CD8-positive, alpha-beta T cell (primary cell): ENCODE measurements at regions of chr4 and their contacts with region 1.

Region 1: DNA sequence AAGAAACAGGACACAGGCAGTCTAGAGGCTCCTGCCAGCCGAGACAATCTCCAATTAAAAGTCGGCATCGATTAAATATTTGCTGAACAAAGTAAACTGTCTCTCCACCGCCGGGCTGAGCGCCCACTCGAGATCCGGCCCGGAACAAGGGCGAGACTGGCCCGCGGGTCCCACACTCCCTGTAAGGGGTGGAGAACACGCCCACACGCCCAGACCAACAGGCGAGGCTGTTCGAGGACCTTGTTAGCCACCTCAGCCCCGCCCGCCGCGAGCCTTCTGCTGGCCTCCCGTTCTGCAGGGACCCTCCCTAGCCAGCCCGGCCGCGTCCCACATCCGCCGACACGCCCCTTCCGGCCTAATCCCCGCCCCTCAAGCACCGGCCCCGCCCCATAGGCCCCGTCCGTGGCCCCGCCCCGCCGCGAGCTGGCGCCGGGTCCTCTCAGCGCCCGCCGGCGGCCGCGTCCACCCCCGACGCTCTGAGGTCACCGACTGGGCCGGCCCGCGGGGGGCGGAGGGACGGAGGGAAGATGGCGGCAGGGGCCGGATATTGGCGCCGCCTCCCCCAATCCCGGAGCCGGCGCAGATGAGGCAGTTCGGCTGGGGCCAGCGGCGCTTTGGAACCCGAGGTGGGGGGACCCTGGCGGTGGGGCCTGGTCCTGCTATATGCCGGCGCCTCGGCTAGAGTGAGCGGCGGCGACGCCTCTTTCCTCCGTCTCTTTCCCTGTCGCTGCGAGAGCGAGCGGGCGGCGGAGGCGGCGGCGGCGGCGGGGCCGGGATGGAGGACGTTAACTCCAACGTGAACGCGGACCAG is at the start of gene SLAIN2:
- DNase-seq: peak; percentile 95 to 100 (median 98)
- ATAC-seq: peak; percentile 84
- H3K4me3 ChIP-seq: peak within 1 kb of the TSS; percentile 80 to 93
- H3K4me3 Mint-ChIP-seq: peak within 1 kb of the TSS; percentile 99
- H3K27ac ChIP-seq: peak within 1 kb of the TSS; percentile 91 to 95
- H3K27ac Mint-ChIP-seq: peak within 1 kb of the TSS; percentile 99
- H3K4me1 ChIP-seq: peaks cover 34% of the 10 kb centered on the region
- H3K4me1 Mint-ChIP-seq: peaks cover 49% of the 10 kb centered on the region
- H3K27me3 ChIP-seq: no peaks in the 10 kb centered on the region
- H3K27me3 Mint-ChIP-seq: no peaks in the 10 kb centered on the region
- CTCF ChIP-seq: peak; percentile 46
- total RNA-seq, gene SLAIN2: 62.4 to 76.5 TPM

Region 2: GRCh38 chr4:47914220-47914925 is 426.8 kb before region 1 on chr4 and contains the start of gene NFXL1:
- CTCF ChIA-PET with region 1: no interaction called
- POLR2A ChIA-PET with region 1: no interaction called
- intact Hi-C with region 1: loop called (anchors 1 to 2 kb)
- DNase-seq: peak; percentile 90 to 97 (median 96)
- ATAC-seq: peak; percentile 95
- H3K4me3 ChIP-seq: peak within 1 kb of the TSS; percentile 99 to 100
- H3K4me3 Mint-ChIP-seq: peak within 1 kb of the TSS; percentile 99
- H3K27ac ChIP-seq: peak within 1 kb of the TSS; percentile 81 to 86
- H3K27ac Mint-ChIP-seq: peak within 1 kb of the TSS; percentile 97
- H3K4me1 ChIP-seq: peaks cover 22% of the 10 kb centered on the region
- H3K4me1 Mint-ChIP-seq: peaks cover 32% of the 10 kb centered on the region
- H3K27me3 ChIP-seq: no peaks in the 10 kb centered on the region
- H3K27me3 Mint-ChIP-seq: no peaks in the 10 kb centered on the region
- CTCF ChIP-seq: no peak
- total RNA-seq, gene NFXL1: 6.5 to 8.1 TPM

Region 3: GRCh38 chr4:48127682-48128394 is 213.3 kb before region 1 on chr4:
- CTCF ChIA-PET with region 1: interaction called, 3 read pairs
- POLR2A ChIA-PET with region 1: no interaction called
- intact Hi-C with region 1: loop called in 1 of 2 experiments (anchors 5 kb)
- DNase-seq: peak; percentile 27 to 81 (median 73)
- ATAC-seq: peak; percentile 67
- H3K4me3 ChIP-seq: peak overlapping the region in 1 of 2 experiments; percentile 18
- H3K4me3 Mint-ChIP-seq: peak overlapping the region; percentile 91
- H3K27ac ChIP-seq: peak overlapping the region; percentile 33 to 67
- H3K27ac Mint-ChIP-seq: peak overlapping the region; percentile 92
- H3K4me1 ChIP-seq: peaks cover 76% of the 10 kb centered on the region
- H3K4me1 Mint-ChIP-seq: peaks cover 87% of the 10 kb centered on the region
- H3K27me3 ChIP-seq: no peaks in the 10 kb centered on the region
- H3K27me3 Mint-ChIP-seq: no peaks in the 10 kb centered on the region
- CTCF ChIP-seq: peak; percentile 59

Region 4: DNA sequence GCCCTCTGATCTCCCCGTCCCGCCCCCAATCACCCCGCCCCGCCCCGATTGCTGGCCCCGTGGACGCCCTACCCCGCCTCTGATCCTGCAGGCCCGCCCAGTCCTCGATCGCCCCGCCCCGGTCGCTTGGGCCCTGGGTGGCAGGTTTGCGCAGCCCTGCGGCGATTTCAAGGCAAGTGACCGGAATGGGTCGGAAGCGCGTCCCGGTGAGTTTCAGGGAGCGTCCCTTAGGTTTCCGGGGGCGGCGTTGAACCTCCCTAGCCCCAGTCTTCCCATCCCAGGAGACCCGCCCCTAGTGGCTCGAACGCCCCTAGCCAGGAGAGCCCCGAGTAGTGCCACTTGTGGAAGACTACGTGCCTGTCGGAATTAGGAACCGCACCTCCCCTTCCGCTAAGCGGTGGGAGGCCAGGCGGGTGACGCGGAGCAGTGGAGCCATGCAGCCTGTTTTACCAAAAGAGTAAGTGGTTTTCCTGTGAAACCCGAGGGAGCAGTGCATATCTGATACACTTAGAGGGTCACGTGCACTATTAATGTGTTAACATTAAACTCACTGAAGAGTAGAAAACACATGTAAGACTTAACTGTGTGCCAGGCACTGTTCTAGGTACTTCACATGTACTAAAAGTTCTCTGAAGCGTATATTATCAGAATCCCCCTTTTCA is 71.2 kb before region 1 on chr4:
- CTCF ChIA-PET with region 1: no interaction called
- POLR2A ChIA-PET with region 1: no interaction called
- intact Hi-C with region 1: loop called (anchors 1 to 2 kb)
- DNase-seq: peak; percentile 74 to 89 (median 85)
- ATAC-seq: peak; percentile 88
- H3K4me3 ChIP-seq: peak overlapping the region; percentile 68 to 98
- H3K4me3 Mint-ChIP-seq: peak overlapping the region; percentile 96
- H3K27ac ChIP-seq: peak overlapping the region; percentile 47 to 60
- H3K27ac Mint-ChIP-seq: peak overlapping the region; percentile 80
- H3K4me1 ChIP-seq: peaks cover 12% of the 10 kb centered on the region
- H3K4me1 Mint-ChIP-seq: peaks cover 18% of the 10 kb centered on the region
- H3K27me3 ChIP-seq: no peaks in the 10 kb centered on the region
- H3K27me3 Mint-ChIP-seq: no peaks in the 10 kb centered on the region
- CTCF ChIP-seq: no peak

Region 5: GRCh38 chr4:48375651-48376293 is 34.6 kb after region 1 on chr4:
- CTCF ChIA-PET with region 1: no interaction called
- POLR2A ChIA-PET with region 1: no interaction called
- intact Hi-C with region 1: loop called in 1 of 2 experiments (anchors 5 kb)
- DNase-seq: no peak
- ATAC-seq: no peak
- H3K4me3 ChIP-seq: no peak overlapping the region
- H3K4me3 Mint-ChIP-seq: no peak overlapping the region
- H3K27ac ChIP-seq: no peak overlapping the region
- H3K27ac Mint-ChIP-seq: no peak overlapping the region
- H3K4me1 ChIP-seq: no peaks in the 10 kb centered on the region
- H3K4me1 Mint-ChIP-seq: peaks cover 33% of the 10 kb centered on the region
- H3K27me3 ChIP-seq: no peaks in the 10 kb centered on the region
- H3K27me3 Mint-ChIP-seq: no peaks in the 10 kb centered on the region
- CTCF ChIP-seq: no peak

Region 6: DNA sequence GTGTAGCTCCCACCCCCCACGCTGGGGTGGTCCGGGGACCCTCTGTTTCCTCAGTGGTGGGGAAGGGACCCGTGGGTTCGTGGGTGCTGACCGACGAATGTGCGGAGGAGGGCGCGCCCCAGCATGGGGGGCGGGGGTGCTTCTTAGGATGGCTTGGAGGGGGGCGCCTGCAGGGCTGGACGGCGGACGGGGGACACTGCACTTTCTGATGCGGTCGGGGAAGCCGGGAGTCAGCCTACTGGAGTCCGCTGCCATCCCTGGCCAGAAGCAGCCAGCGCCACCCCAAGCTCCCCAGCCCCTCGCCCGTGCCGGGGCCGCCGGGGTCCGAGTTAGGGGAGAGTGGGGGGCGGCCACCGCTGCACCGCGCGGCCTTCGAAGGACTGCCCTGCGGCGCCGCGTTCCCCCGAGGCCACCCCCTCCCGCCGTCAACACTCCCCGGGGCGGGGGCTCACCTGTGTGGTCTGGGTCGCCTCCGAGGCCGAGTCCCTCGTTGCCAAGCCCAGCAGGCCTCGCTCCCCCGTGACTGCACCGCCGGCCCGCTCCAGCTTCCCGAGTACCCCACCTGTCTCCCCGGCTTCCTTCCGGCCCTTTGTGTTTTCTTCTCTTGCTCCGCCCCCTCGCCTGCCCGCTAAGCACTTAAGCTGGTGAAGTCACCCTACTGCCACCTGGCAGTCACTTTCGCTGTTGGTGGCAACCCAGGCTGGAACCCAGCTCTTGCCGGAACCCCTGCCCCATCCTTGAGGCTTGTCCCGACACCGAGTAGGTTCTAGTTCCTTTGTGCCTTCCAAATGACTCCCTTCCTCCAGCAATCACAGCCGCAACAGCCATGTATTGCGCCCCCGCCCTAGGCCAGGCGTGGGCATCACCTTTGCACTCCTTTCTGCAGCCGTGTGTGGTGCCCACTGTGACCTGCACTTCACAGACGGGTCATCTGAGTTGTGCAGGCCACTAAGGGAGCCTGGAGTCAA is 565.3 kb after region 1 on chr4 and contains the start of gene OCIAD2:
- CTCF ChIA-PET with region 1: no interaction called
- POLR2A ChIA-PET with region 1: no interaction called
- intact Hi-C with region 1: loop called (anchors 5 kb)
- DNase-seq: peak; percentile 70 to 92 (median 89)
- ATAC-seq: peak; percentile 97
- H3K4me3 ChIP-seq: peak within 1 kb of the TSS; percentile 73 to 82
- H3K4me3 Mint-ChIP-seq: peak within 1 kb of the TSS; percentile 98
- H3K27ac ChIP-seq: peak within 1 kb of the TSS; percentile 64 to 71
- H3K27ac Mint-ChIP-seq: peak within 1 kb of the TSS; percentile 98
- H3K4me1 ChIP-seq: peaks cover 29% of the 10 kb centered on the region
- H3K4me1 Mint-ChIP-seq: peaks cover 49% of the 10 kb centered on the region
- H3K27me3 ChIP-seq: no peaks in the 10 kb centered on the region
- H3K27me3 Mint-ChIP-seq: no peaks in the 10 kb centered on the region
- CTCF ChIP-seq: peak; percentile 36
- total RNA-seq, gene OCIAD2: 70.6 to 72.1 TPM